Activated CD8-positive, alpha-beta T cell treated with anti-CD3 and anti-CD28 coated beads, Interleukin-2, amount 10 ng/mL, durations not matched to agents 7 days and 5 days (primary cell): ENCODE measurements at regions of chr12 and their contacts with region 1.

Region 1: GRCh38 chr12:39294715-39295114 is 148.2 kb downstream of the KIF21A start:
- DNase-seq: no peak
- ATAC-seq: no peak
- H3K4me3 Mint-ChIP-seq: no peak overlapping the region
- H3K27ac Mint-ChIP-seq: no peak overlapping the region
- H3K4me1 Mint-ChIP-seq: peaks cover 5% of the 10 kb centered on the region
- H3K27me3 Mint-ChIP-seq: no peaks in the 10 kb centered on the region

Region 2: DNA sequence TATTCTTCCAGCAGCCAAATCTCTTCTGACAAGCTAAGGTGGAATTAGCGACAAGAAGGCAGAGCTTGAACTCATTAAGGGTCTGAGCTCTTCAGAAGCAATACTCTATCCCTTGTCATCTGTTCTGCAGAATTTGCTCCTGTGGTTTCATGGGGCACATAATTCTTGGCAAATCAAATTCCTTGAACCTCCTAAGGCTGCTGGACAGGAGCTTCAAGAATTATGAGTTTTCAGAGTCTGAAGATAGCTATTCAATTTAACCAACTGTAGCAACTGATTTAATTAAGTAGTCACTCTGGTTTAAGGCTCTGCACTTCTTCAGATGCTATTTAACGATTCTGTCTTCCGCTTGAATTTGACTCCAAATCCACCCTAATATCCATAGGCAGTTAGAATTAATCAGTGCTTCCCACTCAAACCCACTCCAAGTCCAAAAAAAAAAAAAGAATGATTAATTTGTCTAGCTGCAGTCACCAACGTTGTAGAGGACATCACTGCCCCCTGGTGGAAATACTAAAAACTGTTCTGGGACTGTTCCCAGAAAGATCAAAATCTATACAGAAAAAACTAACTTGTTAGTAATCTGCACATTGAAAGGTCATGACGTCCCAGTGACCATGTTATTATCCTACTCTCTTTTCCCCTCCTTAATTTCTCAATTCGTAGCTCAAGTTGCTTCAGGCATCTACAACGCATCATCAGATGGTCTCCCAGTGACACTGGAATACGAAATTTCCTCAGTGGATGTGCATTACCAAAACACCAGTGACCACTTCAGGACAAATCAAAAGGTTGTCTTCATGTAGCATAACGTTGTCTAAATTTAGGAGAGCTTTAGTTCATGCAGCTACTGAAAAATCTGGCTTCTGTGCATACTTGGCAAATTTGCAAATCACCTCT is 21.6 kb before region 1 on chr12:
- CTCF ChIA-PET with region 1: interaction called, 18 read pairs
- POLR2A ChIA-PET with region 1: no interaction called
- DNase-seq: peak; percentile 31
- ATAC-seq: no peak
- H3K4me3 Mint-ChIP-seq: no peak overlapping the region
- H3K27ac Mint-ChIP-seq: no peak overlapping the region
- H3K4me1 Mint-ChIP-seq: no peaks in the 10 kb centered on the region
- H3K27me3 Mint-ChIP-seq: peaks cover 13% of the 10 kb centered on the region

Region 3: DNA sequence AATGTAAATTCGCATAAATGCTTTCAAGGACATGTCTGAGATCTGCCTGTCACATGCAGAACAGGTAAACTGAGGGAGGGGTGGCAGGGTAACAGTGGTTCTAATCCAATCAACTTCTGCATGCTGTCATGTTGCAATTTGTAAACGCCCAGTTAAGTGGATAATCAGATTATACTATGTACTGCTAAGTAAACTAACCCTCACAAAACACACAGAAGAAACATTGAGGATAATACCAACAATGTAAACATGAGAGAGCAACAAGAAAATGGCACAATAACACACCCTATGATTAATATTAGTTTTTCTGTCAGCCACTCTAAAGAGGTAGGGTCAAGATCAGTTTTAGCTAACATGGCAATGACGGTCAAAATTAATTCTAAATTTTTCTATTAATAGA is 24.5 kb after region 1 on chr12:
- CTCF ChIA-PET with region 1: interaction called, 11 read pairs
- POLR2A ChIA-PET with region 1: no interaction called
- DNase-seq: no peak
- ATAC-seq: no peak
- H3K4me3 Mint-ChIP-seq: no peak overlapping the region
- H3K27ac Mint-ChIP-seq: no peak overlapping the region
- H3K4me1 Mint-ChIP-seq: no peaks in the 10 kb centered on the region
- H3K27me3 Mint-ChIP-seq: no peaks in the 10 kb centered on the region